Sigmoid colon (tissue), 7 donors: ENCODE measurements at regions of chr5 and their contacts with region 1.

Region 1: DNA sequence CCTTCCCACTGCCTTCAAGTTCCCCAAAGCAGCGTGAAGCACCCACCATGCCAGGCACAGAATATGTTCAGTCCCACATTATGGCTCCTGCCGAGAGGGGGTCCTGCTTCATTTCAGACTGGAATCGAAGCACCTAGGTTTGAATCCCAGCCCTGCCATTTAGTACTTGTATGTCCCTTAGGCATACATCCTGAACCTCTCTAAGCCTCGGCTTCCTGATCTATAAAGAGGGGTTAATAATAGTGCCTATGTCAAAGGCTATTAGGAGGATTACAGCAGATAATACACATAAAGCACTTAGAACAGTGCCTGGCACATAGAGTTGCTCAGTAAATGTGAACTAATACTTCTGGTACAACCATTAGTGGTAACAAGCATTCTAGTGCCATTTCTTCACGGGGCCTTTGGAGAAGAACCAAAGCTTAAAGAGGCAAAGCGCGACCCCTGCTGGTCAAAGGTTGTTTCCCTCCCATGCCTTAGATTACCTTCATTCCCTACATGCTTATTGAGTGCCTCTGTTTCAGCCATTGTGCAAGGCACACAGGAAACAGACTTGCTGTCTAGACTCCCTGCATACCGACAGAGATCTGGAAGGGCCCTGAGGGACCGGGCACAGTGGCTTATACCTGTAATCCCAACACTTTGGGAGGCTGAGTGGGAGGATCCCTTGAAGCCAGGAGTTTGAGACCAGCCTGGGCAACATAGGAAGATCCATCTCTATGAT is 98.2 kb downstream of the PPARGC1B start:
- DNase-seq: peak; percentile 94
- H3K4me3 ChIP-seq: no peak overlapping the region
- H3K27ac ChIP-seq: peak overlapping the region; percentile 83 to 95 (median 88)
- H3K4me1 ChIP-seq: peaks cover 0 to 71% (median 56%) of the 10 kb centered on the region in 4 donors
- H3K27me3 ChIP-seq: no peaks in the 10 kb centered on the region
- CTCF ChIP-seq: peak; percentile 84 to 90 (median 87)
- EP300 ChIP-seq: no peak
- POLR2A ChIP-seq: no peak

Region 2: DNA sequence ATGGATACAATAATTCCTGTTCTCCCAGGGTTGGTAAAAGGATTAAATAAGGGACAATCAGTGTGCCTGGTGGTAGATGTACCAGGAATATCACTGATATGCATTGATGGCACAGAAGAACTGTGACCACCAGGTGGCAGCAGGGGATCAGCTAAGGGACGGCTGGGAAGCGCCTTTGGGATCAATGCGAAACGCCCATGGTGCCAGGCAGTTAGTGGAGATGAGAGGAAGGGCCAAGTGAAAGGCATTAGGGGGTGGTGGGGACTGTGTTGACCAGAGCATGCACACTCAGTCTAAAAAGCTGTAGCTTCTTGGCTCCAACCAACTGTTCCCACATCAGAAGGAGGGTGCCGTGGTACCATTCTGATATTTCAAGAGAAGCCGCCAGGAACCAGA is 191.5 kb before region 1 on chr5:
- intact Hi-C with region 1: loop called (anchors 1 kb)
- DNase-seq: peak; percentile 50
- H3K4me3 ChIP-seq: no peak overlapping the region
- H3K27ac ChIP-seq: no peak overlapping the region
- H3K4me1 ChIP-seq: peaks cover 0 to 32% (median 26%) of the 10 kb centered on the region in 4 donors
- H3K27me3 ChIP-seq: no peaks in the 10 kb centered on the region
- CTCF ChIP-seq: peak; percentile 59 to 92 (median 82)
- EP300 ChIP-seq: no peak
- POLR2A ChIP-seq: no peak

Region 3: DNA sequence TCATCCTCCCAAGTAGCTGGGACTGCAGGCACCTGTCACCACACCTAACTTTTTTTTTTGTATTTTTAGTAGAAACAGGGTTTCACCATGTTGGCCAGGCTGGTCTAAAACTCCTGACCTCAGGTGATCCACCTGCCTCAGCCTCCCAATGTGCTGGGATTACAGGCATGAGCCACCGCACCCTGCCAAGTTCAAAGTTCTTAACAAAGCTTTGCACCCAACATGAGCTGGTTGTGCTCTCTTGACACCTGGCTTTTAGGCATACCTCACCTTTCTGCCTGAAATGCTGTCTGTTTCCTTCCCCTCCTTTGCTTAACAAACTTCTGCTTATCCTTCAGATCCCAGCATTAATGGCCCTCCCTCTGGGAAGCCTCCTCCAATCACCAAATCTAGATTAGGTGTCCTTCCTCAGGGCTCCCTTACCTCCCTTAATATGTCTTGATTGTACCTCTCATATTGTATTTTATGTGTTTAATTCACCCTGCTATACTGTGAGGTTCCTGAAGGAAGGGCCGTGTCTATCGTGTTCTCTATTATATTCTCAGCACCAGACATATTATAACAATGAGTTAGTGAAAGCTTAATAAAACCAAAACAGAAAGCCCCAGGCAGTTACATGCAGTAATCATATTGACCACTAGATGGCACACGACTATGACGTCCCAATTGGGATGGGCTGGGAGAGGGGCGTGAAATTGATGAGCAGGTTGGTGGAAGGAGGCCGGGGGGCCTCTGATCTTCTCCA is 161.1 kb before region 1 on chr5:
- intact Hi-C with region 1: loop called (anchors 1 kb)
- DNase-seq: no peak
- H3K4me3 ChIP-seq: no peak overlapping the region
- H3K27ac ChIP-seq: peak overlapping the region in 2 of 4 donors; percentile 4 to 23
- H3K4me1 ChIP-seq: peaks cover 0 to 4% (median 4%) of the 10 kb centered on the region in 4 donors
- H3K27me3 ChIP-seq: no peaks in the 10 kb centered on the region
- CTCF ChIP-seq: peak; percentile 79 to 88 (median 82)
- EP300 ChIP-seq: no peak
- POLR2A ChIP-seq: no peak

Region 4: DNA sequence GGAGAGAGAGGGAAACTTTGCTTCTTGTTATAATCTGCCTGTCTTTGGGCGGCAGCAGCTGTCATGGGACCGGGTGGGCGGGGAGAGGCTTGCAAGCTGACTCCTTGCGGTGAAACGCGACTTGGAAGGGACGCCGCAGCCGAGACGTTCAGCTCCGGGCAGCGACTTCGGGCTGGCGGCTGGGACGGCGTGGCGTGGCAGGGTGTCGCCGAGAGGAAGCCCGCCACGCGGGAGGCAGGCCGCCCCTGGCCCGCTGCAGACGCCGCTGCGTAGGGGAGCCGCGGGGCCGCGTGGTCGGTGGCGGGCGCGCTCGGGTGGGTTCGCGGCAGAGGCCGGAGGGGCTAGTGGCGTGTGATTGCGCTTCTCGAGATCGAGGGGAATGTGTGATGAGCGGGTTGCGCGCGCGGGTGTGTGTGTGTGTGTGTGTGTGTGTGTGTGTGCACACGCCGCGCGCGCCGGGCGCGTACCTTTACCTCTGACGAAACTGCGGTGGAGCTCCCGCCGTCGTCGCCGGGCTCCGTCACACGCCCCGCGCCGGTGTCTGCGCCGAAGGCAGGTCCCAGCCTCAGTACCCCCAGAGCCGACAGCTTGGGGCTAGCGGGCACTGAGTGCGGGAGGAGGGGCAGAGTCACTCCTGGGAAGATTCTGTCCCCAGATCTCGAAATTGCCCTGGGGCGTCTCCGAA is 96.5 kb before region 1 on chr5:
- intact Hi-C with region 1: loop called (anchors 1 kb)
- DNase-seq: peak; percentile 96
- H3K4me3 ChIP-seq: peak overlapping the region; percentile 79 to 99 (median 94)
- H3K27ac ChIP-seq: peak overlapping the region; percentile 89 to 99 (median 96)
- H3K4me1 ChIP-seq: peaks cover 0 to 52% (median 33%) of the 10 kb centered on the region in 4 donors
- H3K27me3 ChIP-seq: no peaks in the 10 kb centered on the region
- CTCF ChIP-seq: no peak
- EP300 ChIP-seq: no peak
- POLR2A ChIP-seq: peak; percentile 11 to 13

Region 5: DNA sequence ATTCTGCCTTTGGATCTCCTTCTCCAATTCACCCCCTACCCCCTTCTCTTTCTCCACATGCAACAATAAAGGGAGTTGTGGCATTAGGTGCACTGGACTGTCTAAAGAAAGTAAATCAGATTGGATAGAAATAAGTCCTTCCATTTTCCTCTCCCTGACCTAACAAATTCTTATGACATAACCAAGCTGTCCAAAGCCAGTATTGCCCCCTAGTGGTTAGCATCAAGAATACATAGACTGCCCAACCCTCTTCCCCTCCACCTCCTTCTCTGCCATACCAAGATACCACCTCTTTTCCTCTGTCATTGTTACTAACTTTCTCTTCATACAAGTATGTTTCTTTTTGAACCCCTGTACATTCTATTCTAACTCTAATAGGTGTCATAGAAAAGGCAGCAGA is 52.5 kb before region 1 on chr5:
- intact Hi-C with region 1: loop called (anchors 5 kb)
- DNase-seq: no peak
- H3K4me3 ChIP-seq: no peak overlapping the region
- H3K27ac ChIP-seq: peak overlapping the region; percentile 81 to 94 (median 92)
- H3K4me1 ChIP-seq: peaks cover 0 to 97% (median 90%) of the 10 kb centered on the region in 4 donors
- H3K27me3 ChIP-seq: no peaks in the 10 kb centered on the region
- CTCF ChIP-seq: peak in 3 of 4 experiments; percentile 32 to 51 (median 40)
- EP300 ChIP-seq: no peak
- POLR2A ChIP-seq: no peak

Region 6: DNA sequence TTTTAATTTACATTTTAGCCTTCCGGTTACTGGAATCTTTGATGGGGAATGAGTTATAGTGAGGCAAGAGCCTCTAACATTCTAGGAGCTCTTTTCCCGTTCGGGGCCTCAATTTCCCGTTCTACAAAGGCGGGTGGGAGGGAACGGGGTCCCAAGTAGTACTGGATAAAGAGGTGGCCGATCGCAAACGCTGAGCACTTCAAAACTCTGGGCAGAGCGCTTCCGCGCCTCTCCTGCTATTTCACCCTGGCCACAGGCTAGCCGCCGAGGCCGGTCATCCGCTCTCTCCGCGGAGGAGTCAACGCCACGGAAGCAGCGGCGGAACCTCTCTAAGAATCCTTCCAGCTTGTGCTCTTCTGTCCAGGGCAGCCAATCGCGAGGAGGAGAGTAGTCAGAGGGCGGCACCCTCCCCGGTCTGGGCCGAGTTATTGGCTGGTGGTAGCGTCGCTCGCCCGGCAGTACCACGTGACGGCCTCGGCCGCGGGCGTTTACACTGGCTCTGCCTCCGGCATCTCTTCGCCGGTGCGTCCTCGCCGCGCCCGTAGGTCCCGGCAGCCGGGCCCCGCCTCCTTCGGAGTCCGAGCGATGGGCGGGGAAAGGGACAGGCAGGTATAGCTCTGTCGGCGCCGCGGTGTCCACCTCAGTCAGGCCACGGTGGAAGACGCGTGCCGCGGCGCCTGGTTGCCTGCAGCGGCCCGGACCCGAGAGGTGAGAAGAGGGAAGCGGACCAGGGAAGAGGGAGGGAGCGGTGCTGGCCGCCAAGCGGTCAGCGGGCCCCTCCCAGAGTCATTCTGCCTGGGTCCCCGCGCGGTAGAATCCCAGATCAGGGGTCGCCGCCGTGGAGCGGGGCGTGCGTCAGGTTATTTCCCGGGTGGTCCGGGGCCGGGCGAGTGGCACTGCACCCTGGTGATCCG is 132.2 kb after region 1 on chr5 and contains the start of gene SLC26A2:
- intact Hi-C with region 1: loop called (anchors 2 kb)
- DNase-seq: peak; percentile 99
- H3K4me3 ChIP-seq: peak within 1 kb of the TSS; percentile 62 to 98 (median 82)
- H3K27ac ChIP-seq: peak within 1 kb of the TSS; percentile 86 to 93 (median 90)
- H3K4me1 ChIP-seq: peaks cover 0 to 19% (median 9%) of the 10 kb centered on the region in 4 donors
- H3K27me3 ChIP-seq: no peaks in the 10 kb centered on the region
- CTCF ChIP-seq: no peak
- EP300 ChIP-seq: no peak
- POLR2A ChIP-seq: peak; percentile 89 to 92
- total RNA-seq, gene SLC26A2: 6.4 to 12.1 (median 7.0) TPM

Region 7: DNA sequence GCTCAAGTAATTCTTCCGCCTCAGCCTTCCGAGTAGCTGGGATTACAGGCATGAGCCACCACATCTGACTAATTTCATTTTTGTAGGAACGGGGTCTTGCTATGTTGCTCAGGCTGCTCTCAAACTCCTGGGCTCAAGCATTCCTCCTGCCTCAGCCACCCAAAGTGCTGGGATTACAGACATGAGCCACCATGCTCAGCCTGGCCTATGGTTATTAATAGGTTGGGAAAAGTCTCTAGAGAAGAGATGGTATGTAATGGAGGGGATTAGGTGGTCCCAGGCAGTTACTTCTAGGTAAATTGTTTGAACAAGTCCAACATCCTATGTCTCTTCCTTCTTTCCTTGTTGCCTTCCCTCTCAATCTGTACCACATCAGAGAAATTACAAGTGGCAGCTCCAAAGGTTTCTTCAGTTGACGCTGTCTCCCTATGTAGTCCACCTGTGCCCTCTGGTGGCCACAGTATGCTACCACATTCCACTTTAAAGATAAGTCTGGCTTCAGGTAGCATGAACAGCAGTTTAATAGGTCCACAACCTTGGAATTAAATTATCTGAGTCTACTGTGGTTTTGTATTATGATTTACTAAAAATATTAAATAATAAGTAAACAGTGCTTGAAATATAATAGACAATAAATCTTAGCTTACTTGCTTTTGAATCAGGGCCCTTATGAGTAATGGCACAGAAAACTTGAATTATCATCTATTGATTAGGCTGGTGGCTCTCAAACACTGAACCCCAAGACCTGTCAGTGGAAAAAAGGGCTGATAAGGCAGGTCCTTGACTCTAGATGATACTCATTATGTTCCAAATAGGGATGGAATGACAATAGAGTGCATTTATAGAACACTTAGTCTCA is 162.4 kb after region 1 on chr5:
- intact Hi-C with region 1: loop called (anchors 2 kb)
- DNase-seq: peak; percentile 84
- H3K4me3 ChIP-seq: no peak overlapping the region
- H3K27ac ChIP-seq: no peak overlapping the region
- H3K4me1 ChIP-seq: peaks cover 0 to 5% (median 2%) of the 10 kb centered on the region in 4 donors
- H3K27me3 ChIP-seq: no peaks in the 10 kb centered on the region
- CTCF ChIP-seq: peak; percentile 85 to 96 (median 90)
- EP300 ChIP-seq: no peak
- POLR2A ChIP-seq: no peak

Region 8: GRCh38 chr5:150058480-150059126 is 230.3 kb after region 1 on chr5:
- intact Hi-C with region 1: no loop called
- DNase-seq: peak; percentile 68
- H3K4me3 ChIP-seq: no peak overlapping the region
- H3K27ac ChIP-seq: no peak overlapping the region
- H3K4me1 ChIP-seq: no peaks in the 10 kb centered on the region
- H3K27me3 ChIP-seq: no peaks in the 10 kb centered on the region
- CTCF ChIP-seq: no peak
- EP300 ChIP-seq: no peak
- POLR2A ChIP-seq: no peak